B cell (primary cell): ENCODE measurements at regions of chr5 and their contacts with region 1.

Region 1: DNA sequence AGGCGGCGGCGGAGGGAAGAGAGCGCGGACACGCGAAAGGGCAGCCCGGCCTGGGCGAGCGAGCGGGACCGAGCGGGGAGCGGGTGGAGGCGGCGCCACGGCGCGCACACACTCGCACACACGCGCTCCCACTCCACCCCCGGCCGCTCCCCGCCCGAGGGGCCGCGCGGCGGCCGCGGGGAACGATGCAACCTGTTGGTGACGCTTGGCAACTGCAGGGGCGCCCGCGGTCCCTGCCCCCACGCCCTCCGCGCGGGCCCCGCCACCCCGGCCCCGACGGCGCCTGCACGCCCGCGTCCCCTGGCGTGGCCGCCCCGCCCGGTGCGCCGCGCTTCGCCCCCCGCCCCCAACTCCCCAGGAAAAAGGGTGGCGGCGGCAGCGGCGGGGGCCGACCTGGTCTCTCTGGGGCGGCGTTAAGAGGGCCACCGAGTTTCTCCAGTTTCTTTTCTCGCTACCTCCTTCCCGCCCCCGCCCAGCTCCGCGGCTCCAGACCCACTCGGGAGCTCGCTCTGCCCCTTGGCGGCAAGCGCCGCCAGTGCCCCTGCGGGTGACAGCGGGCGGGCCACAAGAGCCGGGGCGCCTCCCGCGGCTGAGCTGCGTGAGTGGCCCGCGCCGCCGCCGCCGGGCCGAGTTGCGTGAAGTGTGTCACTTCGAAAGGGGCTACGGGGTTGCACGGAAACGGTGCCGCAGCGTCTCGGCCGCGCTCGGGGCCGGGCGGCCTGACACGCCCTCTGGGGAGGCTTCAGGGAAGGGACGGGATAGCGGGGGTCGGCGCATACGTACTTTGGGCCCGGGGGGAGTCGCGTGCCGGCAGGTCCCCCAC is at the start of gene NR3C1:
- DNase-seq: peak; percentile 94
- ATAC-seq: peak; percentile 73
- H3K4me3 ChIP-seq: peak within 1 kb of the TSS; percentile 76 to 94 (median 93)
- H3K4me3 Mint-ChIP-seq: peak within 1 kb of the TSS; percentile 95
- H3K27ac ChIP-seq: peak within 1 kb of the TSS; percentile 90 to 96
- H3K27ac Mint-ChIP-seq: peak within 1 kb of the TSS; percentile 99
- H3K4me1 ChIP-seq: peaks cover 33 to 37% of the 10 kb centered on the region in 2 donors
- H3K4me1 Mint-ChIP-seq: peaks cover 44% of the 10 kb centered on the region
- H3K27me3 ChIP-seq: no peaks in the 10 kb centered on the region
- H3K27me3 Mint-ChIP-seq: no peaks in the 10 kb centered on the region
- CTCF ChIP-seq: peak; percentile 53
- total RNA-seq, gene NR3C1: 218 and 233 TPM in 2 replicates

Region 2: GRCh38 chr5:142356716-142357473 is 1046.9 kb before region 1 on chr5:
- CTCF ChIA-PET with region 1: no interaction called
- POLR2A ChIA-PET with region 1: no interaction called
- intact Hi-C with region 1: loop called (anchors 10 kb)
- DNase-seq: peak; percentile 90
- ATAC-seq: peak; percentile 84
- H3K4me3 ChIP-seq: peak overlapping the region; percentile 54 to 86 (median 64)
- H3K4me3 Mint-ChIP-seq: peak overlapping the region; percentile 84
- H3K27ac ChIP-seq: peak overlapping the region; percentile 28 to 83
- H3K27ac Mint-ChIP-seq: peak overlapping the region; percentile 80
- H3K4me1 ChIP-seq: peaks cover 40 to 44% of the 10 kb centered on the region in 2 donors
- H3K4me1 Mint-ChIP-seq: peaks cover 47% of the 10 kb centered on the region
- H3K27me3 ChIP-seq: peaks cover 0 to 27% (median 10%) of the 10 kb centered on the region in 4 experiments
- H3K27me3 Mint-ChIP-seq: peaks cover 9% of the 10 kb centered on the region
- CTCF ChIP-seq: no peak

Region 3: GRCh38 chr5:142922223-142922952 is 481.4 kb before region 1 on chr5:
- CTCF ChIA-PET with region 1: interaction called, 5 read pairs
- POLR2A ChIA-PET with region 1: no interaction called
- intact Hi-C with region 1: loop called (anchors 2 kb)
- DNase-seq: peak; percentile 43
- ATAC-seq: peak; percentile 60
- H3K4me3 ChIP-seq: no peak overlapping the region
- H3K4me3 Mint-ChIP-seq: no peak overlapping the region
- H3K27ac ChIP-seq: no peak overlapping the region
- H3K27ac Mint-ChIP-seq: no peak overlapping the region
- H3K4me1 ChIP-seq: no peaks in the 10 kb centered on the region
- H3K4me1 Mint-ChIP-seq: peaks cover 7% of the 10 kb centered on the region
- H3K27me3 ChIP-seq: no peaks in the 10 kb centered on the region
- H3K27me3 Mint-ChIP-seq: no peaks in the 10 kb centered on the region
- CTCF ChIP-seq: peak; percentile 55

Region 4: DNA sequence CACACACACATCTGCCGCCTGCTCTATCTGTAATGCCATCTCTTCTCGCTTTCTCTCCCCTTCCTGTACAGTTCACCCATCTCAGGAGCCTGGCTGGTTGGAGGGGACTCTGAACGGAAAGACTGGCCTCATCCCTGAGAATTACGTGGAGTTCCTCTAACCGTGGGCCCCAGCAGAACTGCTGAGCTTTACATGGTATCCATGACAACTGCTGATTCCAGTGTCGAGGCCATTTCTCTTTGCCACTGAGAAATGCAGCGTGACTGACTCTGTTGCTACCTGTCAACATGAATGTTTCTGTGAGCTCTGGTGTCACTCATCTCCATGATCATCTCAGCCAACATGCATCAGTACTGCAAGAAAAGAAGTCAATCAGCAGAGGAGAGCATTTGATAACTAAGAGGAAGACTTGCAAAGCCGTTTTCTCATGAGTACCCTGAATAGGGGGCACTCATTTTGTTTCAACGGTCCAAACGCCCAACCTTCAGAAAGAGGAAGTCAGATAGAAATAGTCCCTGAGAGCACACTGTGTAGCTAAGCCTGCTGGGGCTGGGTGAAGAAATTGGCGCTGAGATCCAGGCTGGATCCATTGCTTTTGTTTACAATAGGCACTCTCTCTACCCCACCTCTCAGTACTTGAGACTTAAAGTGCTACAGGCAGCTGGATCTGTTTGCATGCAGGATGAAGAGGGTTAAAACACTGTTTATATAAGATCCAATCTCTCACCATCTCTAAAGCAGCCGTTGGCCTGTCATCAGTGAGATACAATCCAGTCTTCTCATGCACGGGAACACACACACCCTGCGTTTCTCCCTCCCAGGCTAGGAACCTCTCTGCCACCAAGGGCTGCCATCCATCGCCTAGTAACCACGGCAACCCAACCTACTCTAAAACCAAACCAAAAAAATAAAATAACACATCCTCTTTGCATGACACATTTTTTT is 181.2 kb before region 1 on chr5:
- CTCF ChIA-PET with region 1: interaction called, 4 read pairs
- POLR2A ChIA-PET with region 1: interaction called, 7 read pairs
- intact Hi-C with region 1: loop called (anchors 2 kb)
- DNase-seq: peak; percentile 79
- ATAC-seq: peak; percentile 89
- H3K4me3 ChIP-seq: peak overlapping the region in 4 of 5 experiments; percentile 9 to 52 (median 32)
- H3K4me3 Mint-ChIP-seq: peak overlapping the region; percentile 80
- H3K27ac ChIP-seq: peak overlapping the region; percentile 61 to 81
- H3K27ac Mint-ChIP-seq: peak overlapping the region; percentile 82
- H3K4me1 ChIP-seq: peaks cover 30 to 34% of the 10 kb centered on the region in 2 donors
- H3K4me1 Mint-ChIP-seq: peaks cover 39% of the 10 kb centered on the region
- H3K27me3 ChIP-seq: no peaks in the 10 kb centered on the region
- H3K27me3 Mint-ChIP-seq: no peaks in the 10 kb centered on the region
- CTCF ChIP-seq: no peak

Region 5: DNA sequence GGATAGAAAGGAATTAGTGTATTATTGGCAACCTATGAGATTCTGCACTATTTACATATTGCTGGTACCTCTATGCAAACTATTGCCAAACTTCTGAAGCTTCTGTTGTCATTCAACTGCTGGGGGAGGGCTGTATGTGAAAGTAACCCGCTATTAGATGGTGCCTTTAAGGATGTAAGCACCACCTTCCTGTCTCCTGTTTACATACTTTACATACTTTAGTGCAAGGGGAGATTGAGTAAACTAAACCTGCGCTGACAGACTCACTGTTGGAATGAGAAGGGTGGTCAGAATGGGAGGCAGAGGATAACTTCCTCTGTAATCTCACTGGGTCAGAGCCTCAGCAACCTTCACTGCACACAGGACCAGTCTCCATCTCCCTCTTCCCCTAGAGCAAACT is 124.1 kb before region 1 on chr5:
- CTCF ChIA-PET with region 1: no interaction called
- POLR2A ChIA-PET with region 1: no interaction called
- intact Hi-C with region 1: no loop called
- DNase-seq: no peak
- ATAC-seq: no peak
- H3K4me3 ChIP-seq: no peak overlapping the region
- H3K4me3 Mint-ChIP-seq: no peak overlapping the region
- H3K27ac ChIP-seq: no peak overlapping the region
- H3K27ac Mint-ChIP-seq: no peak overlapping the region
- H3K4me1 ChIP-seq: peaks cover 3 to 11% of the 10 kb centered on the region in 2 donors
- H3K4me1 Mint-ChIP-seq: peaks cover 19% of the 10 kb centered on the region
- H3K27me3 ChIP-seq: no peaks in the 10 kb centered on the region
- H3K27me3 Mint-ChIP-seq: no peaks in the 10 kb centered on the region
- CTCF ChIP-seq: no peak

Region 6: DNA sequence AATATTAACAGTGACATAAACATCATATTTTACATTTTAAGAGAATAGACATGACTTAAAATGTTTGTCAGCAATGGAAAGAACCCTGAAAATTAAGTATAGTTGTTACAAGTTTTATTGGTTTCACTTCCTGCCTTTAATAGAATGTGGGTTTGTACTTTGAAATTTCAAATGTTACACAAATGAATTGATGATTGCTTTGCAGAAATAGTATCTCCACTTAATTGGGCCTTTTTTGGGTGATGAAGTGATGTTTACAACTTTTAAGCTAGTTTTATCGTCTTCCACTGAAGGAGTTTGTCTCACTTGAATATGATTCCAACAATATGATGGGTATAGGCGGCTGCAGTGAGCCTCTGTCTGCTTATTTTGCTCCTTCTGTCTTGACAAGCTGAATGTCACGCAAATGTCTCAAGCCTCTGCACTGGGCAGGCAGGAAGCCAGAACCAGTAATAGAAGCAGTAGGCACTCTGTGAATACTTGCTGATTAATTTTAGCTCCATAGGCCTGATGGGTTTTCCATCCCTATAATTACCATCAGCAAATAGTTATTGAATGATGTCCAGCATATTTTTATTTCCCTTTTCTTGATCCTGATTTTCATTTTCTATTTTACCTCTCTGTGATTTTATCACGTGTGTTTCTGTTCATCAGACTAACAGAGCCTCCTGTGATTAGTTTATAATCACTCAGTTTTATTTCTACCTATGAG is 10.3 kb after region 1 on chr5:
- CTCF ChIA-PET with region 1: interaction called, 15 read pairs
- POLR2A ChIA-PET with region 1: no interaction called
- intact Hi-C with region 1: no loop called
- DNase-seq: peak; percentile 42
- ATAC-seq: peak; percentile 65
- H3K4me3 ChIP-seq: peak overlapping the region in 1 of 5 experiments; percentile 12
- H3K4me3 Mint-ChIP-seq: peak overlapping the region; percentile 58
- H3K27ac ChIP-seq: no peak overlapping the region
- H3K27ac Mint-ChIP-seq: peak overlapping the region; percentile 60
- H3K4me1 ChIP-seq: peaks cover 14 to 15% of the 10 kb centered on the region in 2 donors
- H3K4me1 Mint-ChIP-seq: peaks cover 36% of the 10 kb centered on the region
- H3K27me3 ChIP-seq: no peaks in the 10 kb centered on the region
- H3K27me3 Mint-ChIP-seq: no peaks in the 10 kb centered on the region
- CTCF ChIP-seq: no peak

Region 7: GRCh38 chr5:143564417-143564816 is 160.6 kb after region 1 on chr5:
- CTCF ChIA-PET with region 1: no interaction called
- POLR2A ChIA-PET with region 1: no interaction called
- intact Hi-C with region 1: loop called (anchors 2 kb)
- DNase-seq: peak; percentile 66
- ATAC-seq: peak; percentile 92
- H3K4me3 ChIP-seq: no peak overlapping the region
- H3K4me3 Mint-ChIP-seq: no peak overlapping the region
- H3K27ac ChIP-seq: no peak overlapping the region
- H3K27ac Mint-ChIP-seq: no peak overlapping the region
- H3K4me1 ChIP-seq: peaks cover 4 to 13% of the 10 kb centered on the region in 2 donors
- H3K4me1 Mint-ChIP-seq: peaks cover 21% of the 10 kb centered on the region
- H3K27me3 ChIP-seq: no peaks in the 10 kb centered on the region
- H3K27me3 Mint-ChIP-seq: no peaks in the 10 kb centered on the region
- CTCF ChIP-seq: no peak

Region 8: GRCh38 chr5:144191998-144192397 is 788.2 kb after region 1 on chr5:
- CTCF ChIA-PET with region 1: interaction called, 4 read pairs
- POLR2A ChIA-PET with region 1: interaction called, 4 read pairs
- intact Hi-C with region 1: loop called (anchors 5 kb)
- DNase-seq: peak; percentile 86
- ATAC-seq: peak; percentile 76
- H3K4me3 ChIP-seq: peak overlapping the region in 2 of 5 experiments; percentile 8 to 19
- H3K4me3 Mint-ChIP-seq: no peak overlapping the region
- H3K27ac ChIP-seq: peak overlapping the region; percentile 54 to 70
- H3K27ac Mint-ChIP-seq: no peak overlapping the region
- H3K4me1 ChIP-seq: peaks cover 46% of the 10 kb centered on the region in 2 donors
- H3K4me1 Mint-ChIP-seq: peaks cover 40% of the 10 kb centered on the region
- H3K27me3 ChIP-seq: no peaks in the 10 kb centered on the region
- H3K27me3 Mint-ChIP-seq: no peaks in the 10 kb centered on the region
- CTCF ChIP-seq: peak; percentile 84